PC-9 (cell line): ENCODE measurements at regions of chr19 and their contacts with region 1.

Region 1: DNA sequence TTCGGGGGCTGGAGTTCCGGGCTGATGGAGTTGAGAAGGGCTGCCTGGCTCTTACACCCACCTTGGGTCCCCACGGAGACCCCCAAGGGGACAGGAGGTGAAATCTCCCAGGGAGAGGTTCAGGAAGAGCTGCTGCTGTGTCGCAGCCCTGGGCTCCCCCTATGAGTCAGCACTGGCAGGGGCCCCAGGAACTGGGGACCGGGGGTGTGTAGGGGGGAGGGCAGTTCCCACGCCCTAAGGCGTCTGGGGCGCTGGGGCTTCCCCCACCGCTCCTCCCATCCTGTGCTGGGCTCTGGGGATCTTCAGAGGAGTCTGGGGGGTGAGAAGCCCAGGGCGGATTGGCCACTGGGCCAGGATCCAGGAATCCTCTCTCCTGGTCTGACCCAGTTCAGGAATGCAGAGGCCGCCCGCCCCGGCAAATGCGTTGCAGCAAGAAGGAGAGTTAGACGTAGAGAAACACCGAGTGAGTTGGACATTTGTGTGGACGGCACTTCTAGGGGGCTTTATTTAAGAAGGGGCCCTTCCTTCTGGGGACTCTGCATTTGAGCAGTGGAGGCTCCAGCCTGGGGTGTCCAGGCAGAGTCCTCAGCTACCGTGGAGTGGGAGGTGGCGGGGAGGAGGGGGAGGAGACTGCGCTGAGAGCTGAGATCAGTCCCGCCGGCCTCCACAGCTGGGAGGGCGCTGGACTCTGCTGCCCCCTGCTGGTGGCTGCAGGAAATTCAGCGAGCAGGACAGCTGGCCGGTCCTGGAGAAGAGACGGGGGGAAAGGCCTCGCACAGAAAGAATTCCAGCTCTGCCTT is 15.0 kb upstream of the NANOS3 start:
- DNase-seq: peak; percentile 85 to 95
- H3K4me3 ChIP-seq: peak overlapping the region; percentile 64
- H3K27ac ChIP-seq: peak overlapping the region; percentile 88
- H3K4me1 ChIP-seq: peaks cover 25% of the 10 kb centered on the region
- H3K27me3 ChIP-seq: no peaks in the 10 kb centered on the region
- CTCF ChIP-seq: peak; percentile 99

Region 2: GRCh38 chr19:13132471-13133180 is 729.3 kb before region 1 on chr19:
- CTCF ChIA-PET with region 1: interaction called, 19 read pairs
- POLR2A ChIA-PET with region 1: no interaction called
- intact Hi-C with region 1: no loop called
- DNase-seq: peak; percentile 54 to 69
- H3K4me3 ChIP-seq: no peak overlapping the region
- H3K27ac ChIP-seq: peak overlapping the region; percentile 15; the same call in 1 of the 2 replicates
- H3K4me1 ChIP-seq: peaks cover 10% of the 10 kb centered on the region
- H3K27me3 ChIP-seq: no peaks in the 10 kb centered on the region
- CTCF ChIP-seq: no peak

Region 3: DNA sequence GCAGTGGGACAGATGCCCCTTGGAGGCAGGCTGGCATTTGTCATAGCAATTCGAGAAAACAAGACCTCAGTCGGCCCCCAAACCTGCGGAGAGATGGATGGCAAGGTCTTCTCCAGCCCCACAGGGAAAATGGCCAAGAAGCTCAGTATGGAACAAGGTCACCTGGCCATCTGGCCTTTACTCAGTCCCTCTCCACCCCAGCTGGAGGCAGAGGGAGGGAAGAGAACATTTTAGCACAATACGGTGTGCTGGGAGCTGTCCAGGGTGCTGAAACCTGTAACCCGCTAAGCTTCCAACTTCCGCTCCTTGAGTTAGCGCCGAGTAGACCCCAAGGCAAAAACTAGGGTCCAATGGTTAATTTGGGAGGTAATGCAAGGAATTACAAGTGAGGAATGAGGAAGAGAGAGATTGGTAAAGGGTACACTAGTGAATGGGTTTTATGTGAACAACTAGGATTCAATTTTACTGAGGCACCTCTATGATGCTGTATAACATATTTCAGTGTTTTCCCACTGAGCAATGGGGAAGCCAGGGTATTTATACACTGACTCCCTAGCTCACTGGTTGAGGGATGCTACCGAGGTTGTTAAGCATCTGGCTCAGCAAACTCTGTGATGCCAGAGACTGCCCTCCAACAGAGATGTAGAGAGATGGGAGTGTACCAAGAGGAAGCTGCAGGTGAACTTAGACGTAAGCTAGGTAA is 420.0 kb before region 1 on chr19:
- CTCF ChIA-PET with region 1: no interaction called
- POLR2A ChIA-PET with region 1: no interaction called
- intact Hi-C with region 1: no loop called
- DNase-seq: peak; percentile 12 to 43
- H3K4me3 ChIP-seq: no peak overlapping the region
- H3K27ac ChIP-seq: no peak overlapping the region
- H3K4me1 ChIP-seq: no peaks in the 10 kb centered on the region
- H3K27me3 ChIP-seq: peaks cover 18% of the 10 kb centered on the region
- CTCF ChIP-seq: no peak

Region 4: DNA sequence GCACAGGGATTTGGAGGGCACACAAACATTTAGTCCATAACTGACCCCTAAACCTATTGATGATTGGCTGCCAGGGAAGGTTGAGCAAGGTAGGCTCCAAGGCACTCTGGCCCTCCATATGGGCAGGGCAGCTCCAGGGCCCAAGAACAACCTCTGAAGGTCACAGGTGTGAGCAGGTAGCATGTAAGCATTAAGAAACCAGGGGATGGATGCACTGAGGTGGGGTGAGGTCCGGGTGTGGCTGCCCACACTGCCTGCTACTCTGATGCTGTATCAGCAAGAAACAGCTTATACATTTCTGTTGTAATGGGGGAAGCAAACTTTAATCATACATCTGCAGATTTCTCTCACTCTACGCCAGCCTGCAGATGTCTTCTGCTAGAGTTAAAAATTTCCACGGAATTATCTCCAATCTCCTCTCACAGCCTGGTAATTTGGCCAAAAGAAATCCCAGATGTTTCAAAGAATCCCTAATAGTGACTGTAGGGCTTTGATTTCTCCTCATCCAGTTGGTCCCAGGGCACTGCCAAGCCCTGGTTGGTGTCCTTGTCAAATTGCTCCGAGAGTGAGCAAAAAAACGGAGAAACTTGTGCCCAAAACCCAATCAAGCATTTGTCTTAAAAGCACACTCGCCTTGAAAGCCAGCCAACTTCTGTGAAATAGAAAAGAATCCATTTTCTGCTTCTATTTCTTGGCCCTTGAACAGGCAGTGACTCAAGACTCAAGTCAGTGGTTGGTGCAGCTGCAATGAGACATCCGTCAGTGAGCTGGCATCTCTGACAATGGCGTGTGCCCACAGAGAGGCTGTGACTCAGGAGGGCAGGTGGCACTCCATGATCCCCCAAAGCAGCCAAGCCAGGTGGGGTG is 170.1 kb before region 1 on chr19:
- CTCF ChIA-PET with region 1: no interaction called
- POLR2A ChIA-PET with region 1: no interaction called
- intact Hi-C with region 1: no loop called
- DNase-seq: no peak
- H3K4me3 ChIP-seq: no peak overlapping the region
- H3K27ac ChIP-seq: no peak overlapping the region
- H3K4me1 ChIP-seq: no peaks in the 10 kb centered on the region
- H3K27me3 ChIP-seq: peaks cover 92% of the 10 kb centered on the region
- CTCF ChIP-seq: no peak

Region 5: DNA sequence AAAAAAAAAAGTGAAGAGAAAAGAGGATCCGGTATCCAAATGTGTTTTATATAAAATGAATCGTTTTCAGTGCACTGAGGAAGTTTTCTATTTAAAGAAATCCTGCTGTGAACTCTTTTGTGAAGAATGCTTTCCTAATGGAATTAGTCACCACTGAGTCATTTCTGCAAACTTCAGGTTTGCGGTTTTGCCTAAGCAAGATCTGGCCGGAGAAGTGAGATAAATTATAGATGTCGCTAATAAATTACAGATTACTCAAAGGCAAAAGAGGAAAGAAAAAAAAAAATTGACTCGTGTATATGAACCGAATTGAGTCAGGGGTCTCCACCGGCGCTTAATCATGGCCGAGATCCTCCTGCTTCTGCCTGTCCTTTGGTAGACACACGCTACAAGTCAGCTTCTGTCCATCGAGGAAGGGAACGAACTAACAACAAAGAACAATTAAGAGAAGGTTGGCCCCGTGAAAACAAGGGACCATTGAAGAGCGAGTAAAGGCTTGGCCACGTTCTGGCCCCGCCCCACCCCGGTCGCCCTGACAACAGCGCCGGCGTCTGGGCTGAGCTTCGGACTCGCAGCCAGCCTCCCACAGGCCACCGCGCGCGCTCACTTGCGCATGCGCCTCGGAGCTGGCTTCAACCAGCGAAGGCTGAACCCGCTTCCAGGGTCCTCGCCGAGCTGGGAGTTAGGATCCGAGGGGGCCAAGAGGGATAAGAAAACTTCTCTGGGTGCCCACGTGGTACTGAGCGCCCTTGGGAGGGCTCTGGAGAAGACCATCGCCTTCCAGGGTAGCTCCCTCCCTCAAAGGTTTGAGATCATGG is 130.6 kb before region 1 on chr19:
- CTCF ChIA-PET with region 1: interaction called, 4 read pairs
- POLR2A ChIA-PET with region 1: no interaction called
- intact Hi-C with region 1: loop called (anchors 5 kb)
- DNase-seq: peak; percentile 94 to 97
- H3K4me3 ChIP-seq: peak overlapping the region; percentile 93
- H3K27ac ChIP-seq: peak overlapping the region; percentile 97
- H3K4me1 ChIP-seq: peaks cover 28% of the 10 kb centered on the region
- H3K27me3 ChIP-seq: no peaks in the 10 kb centered on the region
- CTCF ChIP-seq: no peak

Region 6: DNA sequence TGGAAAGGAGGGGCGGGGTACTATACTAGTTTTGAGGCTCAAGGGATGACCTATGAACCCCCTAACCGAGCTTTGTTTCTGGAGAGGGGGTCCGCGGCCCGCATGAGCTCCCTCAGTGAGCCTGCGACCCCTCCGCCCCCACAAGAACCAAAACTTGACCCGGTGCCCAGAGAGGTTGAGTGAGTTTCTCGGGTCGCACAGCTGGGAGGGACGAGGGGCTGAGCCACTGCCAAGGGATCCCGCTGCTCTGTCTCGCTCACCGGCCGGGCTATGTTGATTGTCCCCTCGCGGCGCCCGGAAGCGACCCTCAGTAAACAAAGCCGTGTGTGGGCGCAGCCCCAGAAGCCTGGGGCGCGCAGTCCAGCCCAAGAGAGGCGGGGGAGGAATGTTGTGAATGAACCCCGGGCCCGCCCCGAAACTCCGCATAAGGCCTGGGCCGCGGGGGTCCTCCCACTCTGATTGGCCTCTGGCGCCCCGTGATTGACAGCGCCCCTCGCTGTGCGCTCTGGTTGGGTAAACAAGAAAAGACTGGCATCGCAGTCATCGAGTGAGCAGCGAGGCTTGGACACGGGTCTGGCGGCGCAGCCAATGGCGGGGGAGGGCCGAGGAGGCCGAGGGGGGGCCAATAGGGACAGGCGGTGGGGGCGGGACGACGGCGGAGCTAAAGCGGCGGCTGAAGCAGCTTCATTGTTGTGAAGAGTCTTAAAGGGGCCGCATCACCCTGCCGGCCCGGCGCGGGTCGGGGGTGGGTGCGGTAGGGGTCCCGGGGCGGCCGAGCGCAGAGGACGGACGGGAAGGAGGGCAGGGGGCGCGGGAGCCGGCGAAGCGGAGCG is 67.0 kb before region 1 on chr19 and contains the start of gene ZSWIM4:
- CTCF ChIA-PET with region 1: no interaction called
- POLR2A ChIA-PET with region 1: interaction called, 14 read pairs
- intact Hi-C with region 1: loop called (anchors 2 kb)
- DNase-seq: peak; percentile 98 to 99
- H3K4me3 ChIP-seq: peak within 1 kb of the TSS; percentile 99
- H3K27ac ChIP-seq: peak within 1 kb of the TSS; percentile 94
- H3K4me1 ChIP-seq: peaks cover 33% of the 10 kb centered on the region
- H3K27me3 ChIP-seq: no peaks in the 10 kb centered on the region
- CTCF ChIP-seq: 0 out of 2 replicates have a peak, but pooled peaks have one; percentile 6
- total RNA-seq, gene ZSWIM4: 15.2 and 15.8 TPM in 2 replicates

Region 7: DNA sequence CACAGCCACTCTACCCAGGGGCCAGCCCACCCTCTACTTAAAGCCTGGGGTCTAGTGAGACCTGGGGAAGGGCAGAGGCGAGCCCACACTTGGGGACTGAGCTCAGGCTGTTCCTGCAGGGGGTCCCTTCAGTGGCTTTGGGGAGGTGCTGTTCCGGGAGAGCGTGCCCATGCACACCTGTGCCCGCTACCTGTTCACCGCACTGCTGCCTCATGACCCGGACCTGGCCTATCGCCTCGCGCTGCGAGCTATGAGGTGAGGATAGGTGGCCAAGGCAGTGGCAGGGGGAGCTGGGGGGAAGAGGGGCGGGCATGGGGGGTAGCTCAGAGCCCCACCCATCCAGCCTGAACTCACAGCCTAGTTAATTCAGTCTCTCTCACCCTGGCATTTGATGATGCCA is 42.7 kb before region 1 on chr19:
- CTCF ChIA-PET with region 1: no interaction called
- POLR2A ChIA-PET with region 1: interaction called, 26 read pairs
- intact Hi-C with region 1: no loop called
- DNase-seq: no peak
- H3K4me3 ChIP-seq: no peak overlapping the region
- H3K27ac ChIP-seq: no peak overlapping the region
- H3K4me1 ChIP-seq: no peaks in the 10 kb centered on the region
- H3K27me3 ChIP-seq: no peaks in the 10 kb centered on the region
- CTCF ChIP-seq: no peak

Region 8: DNA sequence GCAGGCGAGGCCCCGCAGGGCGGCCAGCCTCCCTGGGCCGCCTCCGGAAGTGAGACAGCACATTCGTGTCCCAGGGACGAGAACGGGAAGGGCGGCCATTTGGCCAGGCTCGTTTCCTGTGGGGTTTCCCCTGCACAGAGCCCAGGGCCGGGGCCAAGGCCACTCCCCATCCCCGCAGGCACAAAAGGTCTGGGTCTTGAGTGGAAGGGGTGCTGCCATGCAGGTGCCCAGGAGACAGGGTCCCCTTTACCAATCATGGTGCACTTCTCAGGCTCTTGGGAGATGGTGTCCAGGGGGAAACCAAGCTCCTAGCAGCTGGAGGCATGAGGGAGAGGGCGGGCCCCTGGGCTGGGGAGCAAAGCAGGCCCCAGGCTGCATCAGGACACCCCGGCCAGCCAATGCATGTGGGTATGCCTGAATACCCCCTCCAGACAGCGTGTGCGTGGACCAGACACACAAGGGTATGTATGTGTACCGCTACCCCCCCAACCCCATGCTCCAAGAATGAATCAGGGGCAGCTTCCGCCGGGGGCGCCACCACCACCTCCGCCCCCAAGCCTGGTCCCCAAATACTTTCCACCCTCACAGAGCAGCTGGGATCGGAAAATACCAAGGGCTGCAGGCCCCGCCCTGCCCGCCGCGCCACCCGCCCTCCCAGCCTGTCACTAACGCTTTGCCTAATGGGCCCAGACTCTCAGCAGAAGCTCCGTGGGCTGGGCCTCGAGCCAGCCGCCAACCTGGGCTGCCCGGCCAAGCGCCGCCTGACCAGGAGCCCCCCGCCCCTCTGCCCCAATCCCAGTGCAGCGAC is 22.6 kb before region 1 on chr19:
- CTCF ChIA-PET with region 1: interaction called, 10 read pairs
- POLR2A ChIA-PET with region 1: interaction called, 27 read pairs
- intact Hi-C with region 1: loop called (anchors 1 kb)
- DNase-seq: peak; percentile 86 to 89
- H3K4me3 ChIP-seq: peak overlapping the region; percentile 61
- H3K27ac ChIP-seq: peak overlapping the region; percentile 97
- H3K4me1 ChIP-seq: peaks cover 72% of the 10 kb centered on the region
- H3K27me3 ChIP-seq: no peaks in the 10 kb centered on the region
- CTCF ChIP-seq: no peak